ENCODE measurements at regions of chr17 and their contacts with region 1.

Region 1: GRCh38 chr17:2282297-2282873 is 21.2 kb downstream of the SMG6 start:
- DNase-seq: peak; percentile 67 to 78
- ATAC-seq: peak; percentile 84 to 89
- H3K4me3 ChIP-seq: no peak overlapping the region
- H3K27ac ChIP-seq: no peak overlapping the region
- H3K4me1 ChIP-seq: no peaks in the 10 kb centered on the region
- CTCF ChIP-seq: peak; percentile 71
- EP300 ChIP-seq: no peak
- POLR2A ChIP-seq: no peak
- RAD21 ChIP-seq: peak; percentile 63 to 65

Region 2: GRCh38 chr17:2064980-2065785 is 217.2 kb before region 1 on chr17:
- CTCF ChIA-PET with region 1: interaction called, 201 read pairs
- POLR2A ChIA-PET with region 1: no interaction called
- DNase-seq: peak in 1 of 2 experiments; percentile 59
- ATAC-seq: peak; percentile 57 to 82; a peak in 5 of 6 replicates
- H3K4me3 ChIP-seq: no peak overlapping the region
- H3K27ac ChIP-seq: no peak overlapping the region
- H3K4me1 ChIP-seq: no peaks in the 10 kb centered on the region
- CTCF ChIP-seq: peak; percentile 43
- EP300 ChIP-seq: no peak
- POLR2A ChIP-seq: no peak
- RAD21 ChIP-seq: 0 out of 5 replicates have a peak, but pooled peaks of 1 of the 2 experiments have one; percentile 13

Region 3: DNA sequence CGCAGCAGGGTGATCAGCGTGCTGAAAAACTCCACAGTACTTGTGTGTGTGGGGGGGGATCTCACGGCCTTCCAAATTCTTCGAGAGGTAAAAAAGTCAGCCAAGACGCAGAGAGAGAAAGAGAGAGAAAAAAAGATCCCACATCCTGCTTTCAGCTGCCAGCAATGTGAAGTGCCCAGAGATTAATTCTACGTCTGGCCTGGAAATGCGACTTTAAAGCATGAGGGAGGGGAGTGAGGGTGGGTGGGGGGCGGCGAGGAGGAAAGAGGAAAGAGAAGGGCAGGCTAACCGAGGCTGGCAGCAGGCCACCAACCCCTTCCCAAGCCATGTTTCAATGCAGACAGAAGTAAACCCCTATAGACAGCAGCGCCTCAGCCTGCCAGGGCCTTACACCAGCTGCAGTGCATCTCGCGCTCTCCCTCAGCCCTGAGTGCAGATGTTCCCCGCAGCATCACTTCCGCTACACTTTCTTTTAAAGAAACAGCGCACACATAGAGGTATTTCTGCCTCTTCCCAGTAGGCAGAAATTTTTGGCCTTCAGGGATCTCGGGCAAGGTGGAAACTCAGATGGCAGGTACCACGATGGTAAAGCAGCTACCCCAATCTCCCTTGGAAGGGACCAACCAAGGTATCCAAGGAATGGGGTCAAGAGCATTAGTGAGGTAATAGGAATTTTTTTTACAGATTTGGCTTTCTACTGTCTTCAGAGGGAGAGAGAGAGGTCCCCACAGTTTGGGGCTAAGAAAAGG is 66.6 kb before region 1 on chr17:
- CTCF ChIA-PET with region 1: no interaction called
- POLR2A ChIA-PET with region 1: no interaction called
- DNase-seq: no peak
- ATAC-seq: peak; percentile 20 to 48; a peak in 2 of 6 replicates
- H3K4me3 ChIP-seq: no peak overlapping the region
- H3K27ac ChIP-seq: no peak overlapping the region
- H3K4me1 ChIP-seq: no peaks in the 10 kb centered on the region
- CTCF ChIP-seq: no peak
- EP300 ChIP-seq: no peak
- POLR2A ChIP-seq: no peak
- RAD21 ChIP-seq: no peak

Region 4: DNA sequence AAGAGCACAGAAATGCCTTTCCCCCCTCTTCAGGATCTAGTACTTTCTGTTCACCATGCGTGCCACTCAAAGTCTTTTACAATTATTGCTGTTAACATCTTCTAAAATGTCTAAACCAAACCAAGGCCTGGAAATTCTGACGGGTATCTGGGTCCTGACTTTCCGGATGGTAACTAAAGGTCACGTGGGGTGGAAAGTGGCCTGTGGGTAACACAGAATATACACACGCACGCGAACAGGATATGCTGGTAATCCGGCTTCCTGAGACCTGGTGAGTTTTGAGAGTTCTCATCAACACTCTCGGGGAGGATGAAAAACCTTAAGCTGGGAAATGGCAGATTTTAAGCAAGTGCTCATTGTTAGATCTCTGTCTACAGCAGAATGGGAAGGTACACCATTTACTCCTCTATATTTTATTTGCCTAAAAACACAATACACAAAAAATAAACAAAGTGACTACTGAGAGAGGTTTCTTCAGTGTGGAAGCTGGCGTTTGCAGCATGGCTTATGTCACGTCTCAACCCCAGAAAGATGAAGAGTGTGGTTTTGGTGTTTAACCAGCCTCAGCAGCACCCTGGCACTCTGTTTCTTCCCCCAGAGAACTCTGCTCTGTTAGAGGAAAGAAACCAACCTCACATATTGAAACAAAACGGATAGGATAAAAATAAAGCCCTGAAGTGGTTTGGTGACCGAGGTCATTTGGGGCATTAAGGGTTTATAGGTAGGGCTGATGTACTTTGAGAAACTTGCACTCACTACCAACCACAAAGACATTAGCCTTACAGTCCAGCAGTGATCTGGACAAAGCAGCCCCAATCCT is 16.1 kb before region 1 on chr17:
- CTCF ChIA-PET with region 1: interaction called, 102 read pairs
- POLR2A ChIA-PET with region 1: interaction called, 3 read pairs
- DNase-seq: no peak
- ATAC-seq: no peak
- H3K4me3 ChIP-seq: no peak overlapping the region
- H3K27ac ChIP-seq: no peak overlapping the region
- H3K4me1 ChIP-seq: peaks cover 22% of the 10 kb centered on the region
- CTCF ChIP-seq: no peak
- EP300 ChIP-seq: no peak
- POLR2A ChIP-seq: no peak
- RAD21 ChIP-seq: no peak

Region 5: GRCh38 chr17:2295575-2295974 is 13.2 kb after region 1 on chr17:
- CTCF ChIA-PET with region 1: interaction called, 14 read pairs
- POLR2A ChIA-PET with region 1: no interaction called
- DNase-seq: no peak
- ATAC-seq: no peak
- H3K4me3 ChIP-seq: no peak overlapping the region
- H3K27ac ChIP-seq: no peak overlapping the region
- H3K4me1 ChIP-seq: peaks cover 7% of the 10 kb centered on the region; the same call in 1 of the 3 replicates
- CTCF ChIP-seq: no peak
- EP300 ChIP-seq: no peak
- POLR2A ChIP-seq: no peak
- RAD21 ChIP-seq: no peak

Measured in A549 (cell line).